Activated CD4-positive, alpha-beta T cell treated with anti-CD3 and anti-CD28 coated beads for 36 hours (primary cell): ENCODE measurements at regions of chr1 and their contacts with region 1.

Region 1: DNA sequence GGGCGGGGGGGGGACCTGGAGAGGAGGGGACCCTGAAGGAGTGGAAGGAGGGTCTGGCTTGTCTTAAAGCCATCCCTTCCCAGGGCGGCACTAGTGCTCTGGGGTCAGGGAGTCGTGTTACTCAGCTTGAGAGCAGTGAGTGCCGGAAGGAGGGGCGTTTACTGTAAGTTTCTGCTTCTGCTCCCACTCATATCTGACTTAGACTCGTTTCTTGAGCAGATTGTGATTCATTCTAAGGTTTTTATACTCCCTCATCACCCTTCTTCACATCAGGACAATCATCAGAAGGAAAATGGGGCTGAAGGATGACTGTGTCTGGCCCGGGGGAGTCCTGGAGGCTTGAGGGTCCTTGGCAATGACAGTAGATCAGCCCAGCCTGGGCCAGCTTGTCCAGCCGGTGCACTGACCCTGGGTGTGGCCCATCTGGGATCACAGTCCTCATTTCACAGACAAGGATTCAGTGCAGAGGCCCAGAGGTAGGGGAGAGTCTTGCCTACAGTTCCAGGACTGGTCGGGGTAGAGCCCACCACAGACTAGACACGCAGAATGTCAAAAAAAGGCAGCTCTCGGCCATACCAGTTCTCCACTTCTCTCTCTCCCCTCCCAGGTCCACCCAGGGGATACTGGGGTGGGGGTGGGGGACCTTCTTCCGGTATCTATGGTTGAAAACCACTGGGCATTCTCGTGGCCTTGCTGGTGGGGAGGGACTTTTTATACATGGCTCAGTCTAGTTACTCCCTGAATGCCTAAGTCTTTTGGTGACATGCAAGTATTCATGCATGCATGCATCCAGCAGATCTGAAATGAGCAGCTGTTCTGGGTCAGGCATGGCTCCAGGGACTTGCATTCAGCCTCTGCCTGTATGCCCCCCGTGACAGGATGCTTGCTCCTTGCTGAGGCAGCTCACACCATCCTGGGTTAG is 5.1 kb downstream of the TNFRSF8 start:
- DNase-seq: peak; percentile 87
- ATAC-seq: peak; percentile 80
- H3K4me3 Mint-ChIP-seq: peak overlapping the region; percentile 62
- H3K27ac Mint-ChIP-seq: peak overlapping the region; percentile 95
- H3K4me1 Mint-ChIP-seq: peaks cover 57% of the 10 kb centered on the region
- H3K27me3 Mint-ChIP-seq: peaks cover 35% of the 10 kb centered on the region

Region 2: GRCh38 chr1:11979851-11980675 is 88.1 kb before region 1 on chr1 and contains the start of gene MFN2:
- CTCF ChIA-PET with region 1: no interaction called
- POLR2A ChIA-PET with region 1: no interaction called
- intact Hi-C with region 1: loop called in 1 of 2 experiments (anchors 1 kb)
- DNase-seq: peak; percentile 96
- ATAC-seq: peak; percentile 93
- H3K4me3 Mint-ChIP-seq: peak within 1 kb of the TSS; percentile 97
- H3K27ac Mint-ChIP-seq: peak within 1 kb of the TSS; percentile 94
- H3K4me1 Mint-ChIP-seq: peaks cover 36% of the 10 kb centered on the region
- H3K27me3 Mint-ChIP-seq: no peaks in the 10 kb centered on the region
- total RNA-seq, gene MFN2: 52.5 to 71.6 TPM

Region 3: GRCh38 chr1:12019858-12020509 is 48.2 kb before region 1 on chr1:
- CTCF ChIA-PET with region 1: no interaction called
- POLR2A ChIA-PET with region 1: interaction called, 4 read pairs
- intact Hi-C with region 1: loop called in 1 of 2 experiments (anchors 1 kb)
- DNase-seq: no peak
- ATAC-seq: no peak
- H3K4me3 Mint-ChIP-seq: peak overlapping the region; percentile 83
- H3K27ac Mint-ChIP-seq: peak overlapping the region; percentile 74
- H3K4me1 Mint-ChIP-seq: peaks cover 2% of the 10 kb centered on the region
- H3K27me3 Mint-ChIP-seq: no peaks in the 10 kb centered on the region

Region 4: GRCh38 chr1:12047120-12047876 is 20.9 kb before region 1 on chr1:
- CTCF ChIA-PET with region 1: interaction called, 22 read pairs
- POLR2A ChIA-PET with region 1: interaction called, 8 read pairs
- intact Hi-C with region 1: loop called (anchors 1 kb)
- DNase-seq: peak; percentile 86
- ATAC-seq: peak; percentile 79
- H3K4me3 Mint-ChIP-seq: no peak overlapping the region
- H3K27ac Mint-ChIP-seq: no peak overlapping the region
- H3K4me1 Mint-ChIP-seq: peaks cover 22% of the 10 kb centered on the region
- H3K27me3 Mint-ChIP-seq: peaks cover 6% of the 10 kb centered on the region

Region 5: GRCh38 chr1:12161662-12162458 is 93.7 kb after region 1 on chr1:
- CTCF ChIA-PET with region 1: no interaction called
- POLR2A ChIA-PET with region 1: interaction called, 7 read pairs
- intact Hi-C with region 1: loop called in 1 of 2 experiments (anchors 2 kb)
- DNase-seq: peak; percentile 89
- ATAC-seq: peak; percentile 84
- H3K4me3 Mint-ChIP-seq: peak overlapping the region; percentile 15
- H3K27ac Mint-ChIP-seq: peak overlapping the region; percentile 91
- H3K4me1 Mint-ChIP-seq: peaks cover 73% of the 10 kb centered on the region
- H3K27me3 Mint-ChIP-seq: no peaks in the 10 kb centered on the region

Region 6: GRCh38 chr1:12220890-12221289 is 152.7 kb after region 1 on chr1:
- CTCF ChIA-PET with region 1: no interaction called
- POLR2A ChIA-PET with region 1: no interaction called
- intact Hi-C with region 1: no loop called
- DNase-seq: no peak
- ATAC-seq: no peak
- H3K4me3 Mint-ChIP-seq: no peak overlapping the region
- H3K27ac Mint-ChIP-seq: no peak overlapping the region
- H3K4me1 Mint-ChIP-seq: no peaks in the 10 kb centered on the region
- H3K27me3 Mint-ChIP-seq: peaks cover 3% of the 10 kb centered on the region